B cell (primary cell): ENCODE measurements at regions of chr9 and their contacts with region 1.

Region 1: GRCh38 chr9:36023260-36024048 is 13.3 kb upstream of the RECK start:
- DNase-seq: peak; percentile 78
- ATAC-seq: peak; percentile 69
- H3K4me3 ChIP-seq: no peak overlapping the region
- H3K4me3 Mint-ChIP-seq: no peak overlapping the region
- H3K27ac ChIP-seq: no peak overlapping the region
- H3K27ac Mint-ChIP-seq: no peak overlapping the region
- H3K4me1 ChIP-seq: no peaks in the 10 kb centered on the region
- H3K4me1 Mint-ChIP-seq: no peaks in the 10 kb centered on the region
- H3K27me3 ChIP-seq: no peaks in the 10 kb centered on the region
- H3K27me3 Mint-ChIP-seq: no peaks in the 10 kb centered on the region
- CTCF ChIP-seq: peak; percentile 88

Region 2: DNA sequence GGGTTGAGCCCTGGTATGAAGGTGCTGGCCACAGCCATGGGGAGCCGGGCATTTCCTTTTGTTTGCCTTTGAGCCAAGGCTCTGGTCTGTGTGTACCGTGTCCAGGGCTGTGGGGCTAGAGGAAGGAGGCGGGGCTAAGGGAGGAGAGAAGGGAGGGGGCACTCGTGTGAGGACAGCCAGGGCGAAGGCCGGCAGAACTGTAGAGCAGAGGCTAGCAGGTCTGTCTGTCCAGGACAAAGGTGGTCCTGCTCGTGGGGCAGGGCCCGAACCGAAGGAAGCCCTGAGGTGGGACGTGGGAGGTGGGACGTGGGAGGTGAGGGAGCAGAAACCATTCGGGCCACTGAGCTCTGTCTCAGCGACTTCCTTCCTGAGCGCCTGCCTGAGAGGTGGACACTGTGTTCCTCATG is 459.7 kb before region 1 on chr9:
- CTCF ChIA-PET with region 1: no interaction called
- POLR2A ChIA-PET with region 1: no interaction called
- intact Hi-C with region 1: no loop called
- DNase-seq: no peak
- ATAC-seq: no peak
- H3K4me3 ChIP-seq: no peak overlapping the region
- H3K4me3 Mint-ChIP-seq: peak overlapping the region; percentile 24
- H3K27ac ChIP-seq: no peak overlapping the region
- H3K27ac Mint-ChIP-seq: no peak overlapping the region
- H3K4me1 ChIP-seq: peaks cover 4 to 5% of the 10 kb centered on the region in 2 donors
- H3K4me1 Mint-ChIP-seq: peaks cover 6% of the 10 kb centered on the region
- H3K27me3 ChIP-seq: no peaks in the 10 kb centered on the region
- H3K27me3 Mint-ChIP-seq: no peaks in the 10 kb centered on the region
- CTCF ChIP-seq: no peak

Region 3: GRCh38 chr9:35903049-35903448 is 120.4 kb before region 1 on chr9:
- CTCF ChIA-PET with region 1: interaction called, 18 read pairs
- POLR2A ChIA-PET with region 1: no interaction called
- intact Hi-C with region 1: loop called (anchors 1 kb)
- DNase-seq: peak; percentile 66
- ATAC-seq: peak; percentile 51
- H3K4me3 ChIP-seq: no peak overlapping the region
- H3K4me3 Mint-ChIP-seq: no peak overlapping the region
- H3K27ac ChIP-seq: no peak overlapping the region
- H3K27ac Mint-ChIP-seq: no peak overlapping the region
- H3K4me1 ChIP-seq: no peaks in the 10 kb centered on the region
- H3K4me1 Mint-ChIP-seq: no peaks in the 10 kb centered on the region
- H3K27me3 ChIP-seq: peaks cover 0 to 10% (median 1%) of the 10 kb centered on the region in 4 experiments
- H3K27me3 Mint-ChIP-seq: peaks cover 35% of the 10 kb centered on the region
- CTCF ChIP-seq: peak; percentile 90

Region 4: GRCh38 chr9:35954942-35955546 is 68.4 kb before region 1 on chr9:
- CTCF ChIA-PET with region 1: interaction called, 47 read pairs
- POLR2A ChIA-PET with region 1: no interaction called
- intact Hi-C with region 1: no loop called
- DNase-seq: peak; percentile 78
- ATAC-seq: peak; percentile 62
- H3K4me3 ChIP-seq: no peak overlapping the region
- H3K4me3 Mint-ChIP-seq: no peak overlapping the region
- H3K27ac ChIP-seq: no peak overlapping the region
- H3K27ac Mint-ChIP-seq: no peak overlapping the region
- H3K4me1 ChIP-seq: no peaks in the 10 kb centered on the region
- H3K4me1 Mint-ChIP-seq: no peaks in the 10 kb centered on the region
- H3K27me3 ChIP-seq: peaks cover 0 to 12% (median 6%) of the 10 kb centered on the region in 4 experiments
- H3K27me3 Mint-ChIP-seq: peaks cover 35% of the 10 kb centered on the region
- CTCF ChIP-seq: peak; percentile 96

Region 5: GRCh38 chr9:35960039-35960655 is 63.3 kb before region 1 on chr9:
- CTCF ChIA-PET with region 1: interaction called, 47 read pairs
- POLR2A ChIA-PET with region 1: no interaction called
- intact Hi-C with region 1: no loop called
- DNase-seq: no peak
- ATAC-seq: no peak
- H3K4me3 ChIP-seq: no peak overlapping the region
- H3K4me3 Mint-ChIP-seq: no peak overlapping the region
- H3K27ac ChIP-seq: no peak overlapping the region
- H3K27ac Mint-ChIP-seq: no peak overlapping the region
- H3K4me1 ChIP-seq: no peaks in the 10 kb centered on the region
- H3K4me1 Mint-ChIP-seq: no peaks in the 10 kb centered on the region
- H3K27me3 ChIP-seq: peaks cover 0 to 7% (median 0%) of the 10 kb centered on the region in 4 experiments
- H3K27me3 Mint-ChIP-seq: peaks cover 30% of the 10 kb centered on the region
- CTCF ChIP-seq: no peak

Region 6: DNA sequence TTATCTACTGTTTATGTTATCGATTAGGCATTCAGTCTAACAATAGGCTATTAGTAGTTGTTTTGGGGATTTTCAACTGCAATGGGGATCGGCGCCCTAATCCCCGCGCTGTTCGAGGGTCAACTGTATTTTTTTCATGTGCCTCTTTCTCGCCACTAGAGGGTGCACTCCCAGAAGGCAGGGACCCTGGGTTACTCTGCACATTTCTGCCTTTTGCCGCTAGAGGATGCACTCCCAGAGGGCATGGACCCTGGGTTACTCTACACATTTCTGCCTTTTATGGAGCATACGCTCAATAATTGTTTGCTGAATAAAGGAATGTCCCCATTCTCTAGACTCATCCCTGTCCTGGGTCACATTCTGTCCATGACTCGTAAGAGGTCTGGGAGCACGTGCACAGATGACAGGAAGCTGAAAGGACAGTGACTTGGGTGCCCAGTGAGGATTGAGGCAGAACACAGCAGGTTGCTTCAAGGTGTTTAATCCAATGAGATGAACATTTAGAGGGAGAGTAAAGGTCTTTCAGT is 14.6 kb before region 1 on chr9:
- CTCF ChIA-PET with region 1: interaction called, 56 read pairs
- POLR2A ChIA-PET with region 1: no interaction called
- intact Hi-C with region 1: loop called (anchors 2 kb)
- DNase-seq: peak; percentile 76
- ATAC-seq: peak; percentile 94
- H3K4me3 ChIP-seq: no peak overlapping the region
- H3K4me3 Mint-ChIP-seq: no peak overlapping the region
- H3K27ac ChIP-seq: no peak overlapping the region
- H3K27ac Mint-ChIP-seq: no peak overlapping the region
- H3K4me1 ChIP-seq: peaks cover 20 to 29% of the 10 kb centered on the region in 2 donors
- H3K4me1 Mint-ChIP-seq: peaks cover 23% of the 10 kb centered on the region
- H3K27me3 ChIP-seq: peaks cover 0 to 22% (median 7%) of the 10 kb centered on the region in 4 experiments
- H3K27me3 Mint-ChIP-seq: peaks cover 28% of the 10 kb centered on the region
- CTCF ChIP-seq: peak; percentile 100

Region 7: GRCh38 chr9:36036780-36037548 is 13.5 kb after region 1 on chr9 and contains the start of gene RECK:
- CTCF ChIA-PET with region 1: interaction called, 18 read pairs
- POLR2A ChIA-PET with region 1: no interaction called
- intact Hi-C with region 1: no loop called
- DNase-seq: peak; percentile 88
- ATAC-seq: peak; percentile 98
- H3K4me3 ChIP-seq: peak within 1 kb of the TSS; percentile 52 to 82 (median 74)
- H3K4me3 Mint-ChIP-seq: peak within 1 kb of the TSS; percentile 88
- H3K27ac ChIP-seq: peak within 1 kb of the TSS in 1 of 2 donors; percentile 55
- H3K27ac Mint-ChIP-seq: peak within 1 kb of the TSS; percentile 76
- H3K4me1 ChIP-seq: peaks cover 19 to 21% of the 10 kb centered on the region in 2 donors
- H3K4me1 Mint-ChIP-seq: peaks cover 25% of the 10 kb centered on the region
- H3K27me3 ChIP-seq: peaks cover 0 to 3% (median 0%) of the 10 kb centered on the region in 4 experiments
- H3K27me3 Mint-ChIP-seq: no peaks in the 10 kb centered on the region
- CTCF ChIP-seq: no peak
- total RNA-seq, gene RECK: 7.7 and 7.9 TPM in 2 replicates